Tibial artery (tissue), 4 donors: ENCODE measurements at regions of chr18 and their contacts with region 1.

Region 1: GRCh38 chr18:34787931-34788532 is 77.9 kb downstream of the DTNA start:
- DNase-seq: no peak
- H3K4me3 ChIP-seq: no peak overlapping the region
- H3K27ac ChIP-seq: no peak overlapping the region
- H3K4me1 ChIP-seq: peaks cover 0 to 12% (median 0%) of the 10 kb centered on the region in 4 donors
- H3K27me3 ChIP-seq: no peaks in the 10 kb centered on the region
- CTCF ChIP-seq: peak; percentile 71 to 82

Region 2: DNA sequence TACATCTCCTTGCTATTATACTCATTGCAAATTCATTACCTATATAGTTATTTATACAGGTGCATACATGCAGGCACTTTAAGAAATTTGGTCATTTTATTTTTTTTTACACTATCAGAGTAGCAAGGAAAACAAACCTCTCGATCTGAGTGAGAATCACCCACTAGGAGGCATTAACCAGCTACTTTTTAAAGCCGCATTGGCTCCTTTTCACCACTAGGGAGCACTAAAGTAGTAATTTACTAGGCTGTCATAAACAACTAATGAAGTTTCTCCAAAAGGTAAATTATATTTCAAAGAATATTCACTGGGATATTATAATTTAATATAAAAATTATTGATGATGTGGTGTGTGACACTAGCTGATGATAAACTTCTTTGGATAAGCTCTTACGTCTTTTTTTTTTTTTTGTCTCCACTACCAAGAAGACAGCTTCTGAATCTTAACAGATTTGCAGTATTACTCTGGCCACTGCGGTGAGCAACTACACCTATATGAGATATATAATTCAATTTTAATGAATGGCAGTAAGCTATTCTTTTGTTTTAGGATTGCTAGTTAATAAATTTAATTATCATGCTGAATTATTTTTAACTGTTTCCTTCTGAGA is 665.2 kb before region 1 on chr18:
- intact Hi-C with region 1: loop called (anchors 10 kb)
- DNase-seq: peak in 1 of 2 donors; percentile 39
- H3K4me3 ChIP-seq: no peak overlapping the region
- H3K27ac ChIP-seq: no peak overlapping the region
- H3K4me1 ChIP-seq: no peaks in the 10 kb centered on the region
- H3K27me3 ChIP-seq: no peaks in the 10 kb centered on the region
- CTCF ChIP-seq: peak; percentile 68 to 83

Region 3: GRCh38 chr18:34493099-34493544 is 294.9 kb before region 1 on chr18:
- intact Hi-C with region 1: loop called (anchors 10 kb)
- DNase-seq: peak; percentile 77 to 92
- H3K4me3 ChIP-seq: peak overlapping the region; percentile 68 to 78
- H3K27ac ChIP-seq: peak overlapping the region; percentile 74 to 77
- H3K4me1 ChIP-seq: peaks cover 0 to 18% (median 3%) of the 10 kb centered on the region in 4 donors
- H3K27me3 ChIP-seq: no peaks in the 10 kb centered on the region
- CTCF ChIP-seq: no peak

Region 4: DNA sequence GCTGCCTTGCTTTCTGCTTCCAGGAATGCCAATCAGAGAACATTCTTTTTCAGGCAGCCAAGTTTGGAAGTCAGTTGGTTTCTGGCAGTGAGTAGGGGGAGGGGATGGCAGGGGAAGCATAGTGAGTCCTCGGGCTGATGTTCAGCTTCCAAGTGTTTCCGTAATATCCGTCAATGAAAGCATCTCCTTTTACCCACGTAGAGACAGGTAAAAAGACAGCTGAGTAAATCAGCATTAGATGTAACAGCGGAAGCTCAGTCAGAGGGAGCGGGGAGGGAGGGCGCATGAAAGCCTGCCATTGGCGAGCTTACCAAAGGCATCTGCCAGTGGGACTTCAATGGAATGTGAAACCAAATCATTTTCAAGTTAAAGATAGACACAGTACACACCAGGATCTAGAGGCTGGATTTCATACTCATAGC is 195.1 kb before region 1 on chr18:
- intact Hi-C with region 1: loop called (anchors 10 kb)
- DNase-seq: peak; percentile 39 to 78
- H3K4me3 ChIP-seq: peak overlapping the region; percentile 51 to 55
- H3K27ac ChIP-seq: peak overlapping the region; percentile 62 to 78
- H3K4me1 ChIP-seq: peaks cover 0 to 60% (median 23%) of the 10 kb centered on the region in 4 donors
- H3K27me3 ChIP-seq: no peaks in the 10 kb centered on the region
- CTCF ChIP-seq: no peak

Region 5: DNA sequence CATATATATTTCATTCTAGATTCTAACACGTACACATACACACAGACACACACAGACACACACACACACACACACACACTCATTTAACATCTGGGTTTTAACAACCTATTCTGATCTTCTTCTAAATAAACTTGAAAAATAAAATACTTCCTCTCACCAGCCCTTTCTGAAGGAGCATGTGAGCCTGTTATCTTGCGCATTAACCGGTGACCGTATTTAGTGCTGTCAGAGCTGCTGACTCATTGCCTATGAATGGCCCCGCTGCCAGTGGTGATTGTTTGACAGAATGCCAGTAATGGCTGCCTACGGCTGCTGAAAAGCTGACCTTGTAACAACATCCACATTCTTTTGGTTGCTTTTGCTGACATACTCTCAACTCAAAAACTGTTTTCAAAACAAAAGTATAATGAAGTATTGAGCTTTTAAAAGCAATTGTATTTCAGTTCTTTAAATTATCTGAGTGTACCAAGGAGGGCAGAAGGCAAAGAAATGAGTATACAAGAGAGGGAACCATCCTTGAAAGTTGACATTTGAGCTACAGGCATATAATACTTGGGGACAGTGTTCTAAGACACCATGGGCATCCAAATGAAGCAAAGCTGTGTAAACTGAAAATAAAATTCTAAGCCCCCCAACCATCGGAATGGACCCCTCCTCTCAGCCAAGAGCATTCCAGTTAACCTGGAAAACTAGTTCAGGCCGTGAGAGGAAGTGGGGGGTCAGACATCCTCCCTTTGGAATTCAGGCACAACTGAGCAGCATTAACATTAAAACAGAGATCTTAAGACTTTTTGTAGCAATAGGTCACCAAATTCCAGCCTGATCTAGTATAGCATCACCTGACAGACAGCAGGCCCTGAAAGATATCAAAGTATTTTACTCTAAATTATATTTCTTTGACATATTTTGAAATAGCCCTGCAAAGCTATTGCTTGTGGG is 128.2 kb before region 1 on chr18:
- intact Hi-C with region 1: loop called (anchors 10 kb)
- DNase-seq: peak; percentile 90 to 93
- H3K4me3 ChIP-seq: no peak overlapping the region
- H3K27ac ChIP-seq: peak overlapping the region; percentile 77 to 82
- H3K4me1 ChIP-seq: peaks cover 0 to 66% (median 16%) of the 10 kb centered on the region in 4 donors
- H3K27me3 ChIP-seq: no peaks in the 10 kb centered on the region
- CTCF ChIP-seq: no peak

Region 6: GRCh38 chr18:34710934-34711333 is 77.1 kb before region 1 on chr18:
- intact Hi-C with region 1: no loop called
- DNase-seq: no peak
- H3K4me3 ChIP-seq: peak overlapping the region; percentile 24 to 33
- H3K27ac ChIP-seq: peak overlapping the region; percentile 59 to 66
- H3K4me1 ChIP-seq: peaks cover 0 to 53% (median 40%) of the 10 kb centered on the region in 4 donors
- H3K27me3 ChIP-seq: no peaks in the 10 kb centered on the region
- CTCF ChIP-seq: no peak